Activated B cell treated with CpG ODN at 0.5 μM for 24 hours (primary cell): ENCODE measurements at regions of chr15 and their contacts with region 1.

Region 1: GRCh38 chr15:63610200-63610841 is 13.1 kb downstream of the FBXL22 start:
- DNase-seq: no peak
- ATAC-seq: peak; percentile 91
- H3K4me3 Mint-ChIP-seq: peak overlapping the region; percentile 21
- H3K27ac Mint-ChIP-seq: peak overlapping the region; percentile 88
- H3K4me1 Mint-ChIP-seq: peaks cover 26% of the 10 kb centered on the region
- H3K27me3 Mint-ChIP-seq: no peaks in the 10 kb centered on the region
- CTCF ChIP-seq: no peak

Region 2: DNA sequence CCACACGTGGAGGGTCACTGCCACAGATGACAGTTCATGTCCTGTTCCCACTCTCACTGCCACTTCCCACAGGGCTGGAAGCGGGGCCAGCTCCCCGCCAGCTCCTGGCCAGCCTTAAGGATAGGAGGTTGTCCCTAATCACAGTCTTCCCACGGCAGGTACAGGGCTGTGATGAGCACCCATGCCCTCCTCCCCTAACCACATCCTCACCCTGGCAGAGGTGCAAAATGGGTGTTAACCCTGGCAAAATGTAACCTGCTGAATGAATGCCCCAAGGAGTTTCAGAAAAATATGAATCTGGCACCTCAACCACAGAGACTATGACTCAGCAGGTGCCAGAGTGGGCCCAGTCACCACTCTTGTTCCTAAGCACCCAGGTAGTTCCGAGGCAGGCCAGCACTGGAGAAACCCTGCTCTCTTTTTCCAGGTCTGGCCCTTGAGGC is 752.9 kb before region 1 on chr15:
- CTCF ChIA-PET with region 1: no interaction called
- POLR2A ChIA-PET with region 1: no interaction called
- intact Hi-C with region 1: no loop called
- DNase-seq: no peak
- ATAC-seq: no peak
- H3K4me3 Mint-ChIP-seq: no peak overlapping the region
- H3K27ac Mint-ChIP-seq: no peak overlapping the region
- H3K4me1 Mint-ChIP-seq: no peaks in the 10 kb centered on the region
- H3K27me3 Mint-ChIP-seq: peaks cover 42% of the 10 kb centered on the region
- CTCF ChIP-seq: no peak

Region 3: GRCh38 chr15:63582718-63583426 is 27.4 kb before region 1 on chr15:
- CTCF ChIA-PET with region 1: no interaction called
- POLR2A ChIA-PET with region 1: no interaction called
- intact Hi-C with region 1: no loop called
- DNase-seq: no peak
- ATAC-seq: no peak
- H3K4me3 Mint-ChIP-seq: no peak overlapping the region
- H3K27ac Mint-ChIP-seq: peak overlapping the region; percentile 54
- H3K4me1 Mint-ChIP-seq: peaks cover 23% of the 10 kb centered on the region
- H3K27me3 Mint-ChIP-seq: no peaks in the 10 kb centered on the region
- CTCF ChIP-seq: no peak

Region 4: GRCh38 chr15:63668601-63669000 is 58.3 kb after region 1 on chr15:
- CTCF ChIA-PET with region 1: interaction called, 3 read pairs
- POLR2A ChIA-PET with region 1: no interaction called
- intact Hi-C with region 1: loop called (anchors 5 kb)
- DNase-seq: no peak
- ATAC-seq: peak; percentile 69
- H3K4me3 Mint-ChIP-seq: peak overlapping the region; percentile 66
- H3K27ac Mint-ChIP-seq: peak overlapping the region; percentile 81
- H3K4me1 Mint-ChIP-seq: peaks cover 24% of the 10 kb centered on the region
- H3K27me3 Mint-ChIP-seq: no peaks in the 10 kb centered on the region
- CTCF ChIP-seq: no peak